ENCODE measurements at regions of chr5 and their contacts with region 1.

Region 1: GRCh38 chr5:141992349-141992963 is 20.4 kb downstream of the GNPDA1 start:
- DNase-seq: peak; percentile 87
- ATAC-seq: peak; percentile 76

Region 2: GRCh38 chr5:142143878-142144277 is 151.4 kb after region 1 on chr5:
- intact Hi-C with region 1: loop called (anchors 5 kb)
- DNase-seq: no peak
- ATAC-seq: peak; percentile 35

Measured in sciatic nerve (tissue), 2 donors.